ENCODE measurements at regions of chr12 and their contacts with region 1.

Region 1: GRCh38 chr12:89789862-89790261 is 81.2 kb upstream of the ATP2B1 start:
- DNase-seq: peak; percentile 83
- ATAC-seq: peak; percentile 95
- H3K4me3 ChIP-seq: no peak overlapping the region
- H3K4me3 Mint-ChIP-seq: peak overlapping the region; percentile 62
- H3K27ac ChIP-seq: peak overlapping the region; percentile 32 to 58
- H3K27ac Mint-ChIP-seq: peak overlapping the region; percentile 81
- H3K4me1 ChIP-seq: peaks cover 11% of the 10 kb centered on the region in 2 donors
- H3K4me1 Mint-ChIP-seq: peaks cover 27% of the 10 kb centered on the region
- H3K27me3 ChIP-seq: no peaks in the 10 kb centered on the region
- H3K27me3 Mint-ChIP-seq: no peaks in the 10 kb centered on the region
- CTCF ChIP-seq: no peak

Region 2: GRCh38 chr12:89721291-89721987 is 68.4 kb before region 1 on chr12:
- CTCF ChIA-PET with region 1: no interaction called
- POLR2A ChIA-PET with region 1: no interaction called
- intact Hi-C with region 1: loop called (anchors 5 kb)
- DNase-seq: peak; percentile 78
- ATAC-seq: peak; percentile 94
- H3K4me3 ChIP-seq: peak overlapping the region; percentile 2 to 46 (median 12)
- H3K4me3 Mint-ChIP-seq: peak overlapping the region; percentile 74
- H3K27ac ChIP-seq: peak overlapping the region; percentile 71 to 91
- H3K27ac Mint-ChIP-seq: peak overlapping the region; percentile 93
- H3K4me1 ChIP-seq: peaks cover 20 to 28% of the 10 kb centered on the region in 2 donors
- H3K4me1 Mint-ChIP-seq: peaks cover 39% of the 10 kb centered on the region
- H3K27me3 ChIP-seq: no peaks in the 10 kb centered on the region
- H3K27me3 Mint-ChIP-seq: no peaks in the 10 kb centered on the region
- CTCF ChIP-seq: no peak

Region 3: GRCh38 chr12:89742337-89743022 is 47.4 kb before region 1 on chr12:
- CTCF ChIA-PET with region 1: no interaction called
- POLR2A ChIA-PET with region 1: no interaction called
- intact Hi-C with region 1: loop called (anchors 1 kb)
- DNase-seq: peak; percentile 65
- ATAC-seq: peak; percentile 92
- H3K4me3 ChIP-seq: peak overlapping the region in 2 of 5 experiments; percentile 21 to 48
- H3K4me3 Mint-ChIP-seq: peak overlapping the region; percentile 70
- H3K27ac ChIP-seq: peak overlapping the region; percentile 18 to 72
- H3K27ac Mint-ChIP-seq: peak overlapping the region; percentile 91
- H3K4me1 ChIP-seq: peaks cover 12 to 14% of the 10 kb centered on the region in 2 donors
- H3K4me1 Mint-ChIP-seq: peaks cover 20% of the 10 kb centered on the region
- H3K27me3 ChIP-seq: no peaks in the 10 kb centered on the region
- H3K27me3 Mint-ChIP-seq: no peaks in the 10 kb centered on the region
- CTCF ChIP-seq: no peak

Region 4: DNA sequence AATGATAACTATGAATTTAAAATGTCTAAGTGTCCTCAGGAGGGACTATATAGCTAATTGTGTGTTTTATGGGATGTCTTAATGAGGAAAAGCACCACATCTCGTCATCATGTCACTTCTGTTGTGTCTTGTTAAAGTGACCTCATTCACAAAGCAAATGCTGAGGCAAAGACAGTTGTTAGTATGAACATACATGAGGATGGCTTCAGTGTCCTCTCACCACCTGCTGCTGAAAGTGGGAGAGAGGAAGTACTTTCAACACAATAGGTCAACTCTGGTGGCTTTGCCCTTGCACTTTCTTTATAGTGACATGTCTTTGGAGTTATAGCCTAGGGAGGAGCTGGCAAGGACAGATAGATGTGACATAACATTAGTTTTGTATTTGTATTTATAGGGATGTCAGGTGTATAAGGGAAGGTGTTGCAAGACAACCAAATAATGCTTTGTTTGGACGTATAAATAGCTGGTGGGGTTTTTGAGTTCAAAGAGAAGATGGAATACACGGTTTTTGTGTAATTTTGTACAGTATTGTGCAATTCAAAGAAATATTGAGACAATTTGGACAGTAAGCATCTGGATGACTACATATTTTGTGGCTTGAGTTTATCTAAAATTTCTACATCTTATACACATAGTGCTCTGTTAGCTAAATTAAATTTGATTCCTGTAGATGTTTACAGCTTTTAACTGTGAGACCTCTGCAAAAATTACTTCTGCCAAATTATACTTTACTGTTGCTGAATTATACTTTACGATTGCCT is 50.5 kb after region 1 on chr12:
- CTCF ChIA-PET with region 1: no interaction called
- POLR2A ChIA-PET with region 1: no interaction called
- intact Hi-C with region 1: loop called (anchors 10 kb)
- DNase-seq: no peak
- ATAC-seq: no peak
- H3K4me3 ChIP-seq: no peak overlapping the region
- H3K4me3 Mint-ChIP-seq: no peak overlapping the region
- H3K27ac ChIP-seq: no peak overlapping the region
- H3K27ac Mint-ChIP-seq: peak overlapping the region; percentile 0
- H3K4me1 ChIP-seq: no peaks in the 10 kb centered on the region
- H3K4me1 Mint-ChIP-seq: peaks cover 12% of the 10 kb centered on the region
- H3K27me3 ChIP-seq: no peaks in the 10 kb centered on the region
- H3K27me3 Mint-ChIP-seq: no peaks in the 10 kb centered on the region
- CTCF ChIP-seq: no peak

Measured in B cell (primary cell).